Sigmoid colon (tissue), 7 donors: ENCODE measurements at regions of chr6 and their contacts with region 1.

Region 1: DNA sequence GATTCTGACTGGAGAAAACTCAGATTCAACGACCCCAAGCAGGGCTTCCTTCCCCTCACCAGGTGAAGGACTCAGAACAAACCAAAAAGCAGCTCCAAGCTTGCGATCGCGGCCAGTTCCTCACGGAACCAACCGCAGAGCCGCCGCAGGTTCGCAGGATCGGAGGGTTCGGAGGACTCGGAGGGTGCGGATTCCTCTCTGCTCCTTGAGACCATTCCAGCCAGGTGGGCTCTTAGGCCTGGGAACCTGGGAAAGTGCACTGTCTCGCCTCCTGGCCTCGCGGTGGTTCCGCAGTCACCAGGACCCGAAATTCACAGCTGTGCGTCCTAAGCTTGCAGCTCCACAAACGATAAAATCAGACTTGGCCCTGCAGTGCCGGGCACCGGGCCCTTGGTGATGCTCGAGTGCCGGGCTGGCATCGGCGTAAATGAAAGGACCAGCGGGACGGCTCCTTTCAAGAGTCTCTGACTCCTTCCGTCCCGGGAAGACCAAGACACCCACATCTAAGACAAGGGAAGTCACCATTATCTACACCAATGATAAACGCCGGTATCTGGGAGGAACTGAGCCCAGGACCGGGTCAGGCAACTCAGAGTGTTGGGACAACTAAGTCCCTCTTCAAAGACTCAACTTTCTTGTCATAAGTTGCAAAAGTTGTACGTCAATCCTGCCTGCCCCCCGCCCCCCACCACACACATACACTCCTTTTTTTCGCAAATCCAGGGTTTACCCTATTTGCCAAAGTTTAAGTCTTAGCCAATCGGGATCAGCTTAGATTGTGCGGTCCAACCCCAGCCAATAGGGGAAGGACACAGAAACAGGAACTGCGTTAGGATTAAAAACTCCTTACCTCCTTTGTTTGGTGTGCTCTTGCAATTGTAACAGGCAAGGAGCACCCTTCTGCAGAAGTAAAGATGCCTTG is 69.8 kb upstream of the PRSS16 start:
- DNase-seq: peak; percentile 92
- H3K4me3 ChIP-seq: peak overlapping the region; percentile 80 to 100 (median 96)
- H3K27ac ChIP-seq: peak overlapping the region; percentile 85 to 91 (median 88)
- H3K4me1 ChIP-seq: peaks cover 0 to 13% (median 3%) of the 10 kb centered on the region in 4 donors
- H3K27me3 ChIP-seq: no peaks in the 10 kb centered on the region
- CTCF ChIP-seq: peak in 3 of 4 experiments; percentile 28 to 34 (median 31)
- EP300 ChIP-seq: no peak
- POLR2A ChIP-seq: peak in 1 of 2 donors; percentile 26

Region 2: DNA sequence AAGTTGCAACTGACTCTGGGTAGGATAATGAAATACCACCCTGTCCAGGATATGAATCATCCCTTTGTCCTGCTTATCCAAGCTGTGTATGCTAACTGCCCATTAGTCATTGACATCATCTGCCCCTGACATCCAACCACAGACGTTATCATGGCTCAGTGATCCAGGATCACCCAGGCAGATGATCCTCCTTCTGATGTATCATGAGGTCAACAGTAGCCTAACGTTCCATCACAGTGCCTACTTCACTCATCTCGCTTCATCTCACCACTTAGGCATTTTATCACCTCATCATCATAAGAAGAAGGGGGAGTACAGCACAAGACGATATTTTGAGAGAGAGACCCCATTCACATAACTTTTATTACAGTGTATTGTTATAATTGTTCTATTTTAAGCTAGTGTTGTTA is 826.2 kb before region 1 on chr6:
- intact Hi-C with region 1: no loop called
- DNase-seq: no peak
- H3K4me3 ChIP-seq: no peak overlapping the region
- H3K27ac ChIP-seq: no peak overlapping the region
- H3K4me1 ChIP-seq: no peaks in the 10 kb centered on the region
- H3K27me3 ChIP-seq: no peaks in the 10 kb centered on the region
- CTCF ChIP-seq: no peak
- EP300 ChIP-seq: no peak
- POLR2A ChIP-seq: no peak

Region 3: DNA sequence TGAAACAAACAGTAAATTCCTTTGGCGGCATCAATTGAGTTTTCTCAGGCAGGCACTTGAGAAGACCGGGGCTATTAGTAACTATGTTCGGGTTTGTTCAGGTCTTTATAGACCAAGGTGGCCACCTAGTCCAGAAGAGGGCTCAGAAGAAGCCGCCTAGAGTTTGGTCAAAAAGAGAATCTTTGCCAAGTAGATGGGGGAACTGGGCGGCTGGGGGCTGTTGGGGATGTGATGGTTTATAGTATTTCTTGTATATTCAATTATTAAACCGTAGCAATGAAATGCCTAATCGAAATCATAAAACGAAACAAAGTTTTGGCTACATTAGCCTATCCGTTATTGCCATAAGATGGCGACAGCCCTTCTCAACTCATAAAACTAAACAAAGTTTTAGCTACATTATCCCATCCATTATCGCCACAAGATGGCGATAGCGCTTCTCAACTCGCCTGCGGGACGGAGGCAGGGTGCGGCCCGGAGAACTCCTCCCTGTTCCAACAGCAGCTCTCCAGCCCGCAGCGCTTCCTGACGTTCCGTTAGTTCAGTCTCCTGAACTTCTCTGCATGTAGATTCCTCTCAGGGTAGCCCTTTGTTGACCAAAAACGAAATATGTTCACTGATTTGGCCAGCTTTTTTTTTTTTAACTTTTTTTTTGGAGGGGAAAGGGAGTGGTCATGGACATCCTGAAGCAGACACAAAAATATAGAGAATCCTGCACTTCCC is 50.8 kb before region 1 on chr6:
- intact Hi-C with region 1: loop called (anchors 5 kb)
- DNase-seq: peak; percentile 95
- H3K4me3 ChIP-seq: peak overlapping the region in 3 of 4 donors; percentile 31 to 42 (median 38)
- H3K27ac ChIP-seq: peak overlapping the region; percentile 66 to 79 (median 70)
- H3K4me1 ChIP-seq: peaks cover 0 to 6% (median under 1%) of the 10 kb centered on the region in 4 donors
- H3K27me3 ChIP-seq: no peaks in the 10 kb centered on the region
- CTCF ChIP-seq: peak in 3 of 4 experiments; percentile 63 to 77 (median 77)
- EP300 ChIP-seq: no peak
- POLR2A ChIP-seq: no peak

Region 4: DNA sequence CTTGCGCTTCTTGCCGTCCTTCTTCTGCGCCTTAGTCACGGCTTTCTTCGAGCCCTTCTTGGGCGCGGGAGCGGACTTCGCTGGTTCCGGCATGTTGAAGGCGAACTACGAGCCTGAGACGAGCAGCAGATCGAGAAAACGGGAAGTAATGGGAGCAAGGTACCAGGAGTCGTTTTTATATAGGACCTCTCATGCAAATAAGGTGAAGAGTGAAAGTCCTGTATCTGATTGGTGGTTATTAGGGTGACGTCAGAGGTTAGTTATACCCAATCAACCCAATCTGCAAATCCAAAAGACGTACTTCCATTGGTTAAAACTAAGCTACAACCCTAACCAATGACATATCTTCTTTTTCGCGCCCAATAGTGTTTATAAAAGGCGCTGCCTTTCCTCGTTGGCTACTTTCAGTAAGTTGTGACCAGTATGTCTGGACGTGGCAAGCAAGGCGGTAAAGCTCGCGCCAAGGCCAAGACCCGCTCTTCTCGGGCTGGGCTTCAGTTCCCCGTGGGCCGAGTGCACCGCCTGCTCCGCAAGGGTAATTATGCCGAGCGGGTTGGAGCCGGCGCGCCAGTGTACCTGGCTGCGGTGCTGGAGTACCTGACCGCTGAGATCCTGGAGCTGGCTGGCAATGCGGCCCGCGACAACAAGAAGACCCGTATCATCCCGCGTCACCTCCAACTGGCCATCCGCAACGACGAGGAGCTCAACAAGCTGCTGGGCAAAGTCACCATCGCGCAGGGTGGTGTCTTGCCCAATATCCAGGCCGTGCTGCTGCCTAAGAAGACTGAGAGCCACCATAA is 30.8 kb before region 1 on chr6:
- intact Hi-C with region 1: loop called (anchors 1 kb)
- DNase-seq: peak; percentile 92
- H3K4me3 ChIP-seq: peak overlapping the region; percentile 50 to 59 (median 56)
- H3K27ac ChIP-seq: peak overlapping the region; percentile 86 to 94 (median 91)
- H3K4me1 ChIP-seq: peaks cover 0 to 26% (median 20%) of the 10 kb centered on the region in 4 donors
- H3K27me3 ChIP-seq: no peaks in the 10 kb centered on the region
- CTCF ChIP-seq: no peak
- EP300 ChIP-seq: peak in 1 of 4 donors; percentile 20
- POLR2A ChIP-seq: peak; percentile 95 to 96

Region 5: DNA sequence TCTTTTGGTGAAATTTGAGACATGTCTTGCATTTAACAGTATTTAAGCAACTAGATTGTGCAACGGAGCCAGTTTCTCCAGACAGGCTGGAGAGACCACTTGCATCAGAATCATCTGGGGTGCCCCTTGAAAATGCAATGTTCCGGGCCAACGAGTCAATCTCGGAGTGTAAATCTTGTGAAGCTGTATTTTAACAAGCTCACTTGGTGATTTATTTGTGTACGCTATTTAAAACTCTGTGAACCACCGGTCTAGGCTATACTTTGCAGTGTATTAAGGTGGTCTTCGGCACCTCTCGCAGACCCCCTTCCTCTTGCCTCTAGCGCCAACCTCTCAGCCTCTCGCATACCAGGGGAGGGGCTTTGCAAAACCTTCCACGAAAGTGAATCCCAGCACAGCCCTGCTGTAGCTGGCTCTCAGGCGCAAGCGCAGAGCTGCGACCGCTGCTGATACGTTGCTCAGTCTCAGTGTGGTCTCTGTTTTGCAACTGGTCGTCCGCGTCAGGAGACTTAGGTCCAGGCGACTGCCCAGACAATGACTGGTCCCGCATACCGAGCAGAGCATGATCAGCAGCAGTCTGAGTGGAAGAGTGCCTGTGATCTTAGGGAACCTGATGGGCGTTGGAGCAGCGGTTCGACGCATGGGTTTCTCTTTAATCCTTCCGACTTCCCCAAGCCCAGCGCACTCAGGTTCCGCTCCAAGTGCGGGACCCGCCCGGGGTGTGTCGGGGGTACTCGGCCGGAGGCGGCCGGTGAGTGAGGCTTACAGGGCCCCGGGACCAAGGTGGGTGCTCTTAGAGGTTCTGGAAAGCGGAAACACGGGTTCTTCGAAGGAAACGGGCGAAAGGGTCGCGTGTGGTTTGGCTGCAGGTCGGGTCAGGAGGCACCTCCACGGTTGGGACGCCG is 210.8 kb after region 1 on chr6 and contains the start of gene ZNF391:
- intact Hi-C with region 1: loop called (anchors 5 kb)
- DNase-seq: peak; percentile 85
- H3K4me3 ChIP-seq: peak within 1 kb of the TSS; percentile 58 to 71 (median 68)
- H3K27ac ChIP-seq: peak within 1 kb of the TSS; percentile 76 to 81 (median 78)
- H3K4me1 ChIP-seq: peaks cover 0 to 15% (median 8%) of the 10 kb centered on the region in 4 donors
- H3K27me3 ChIP-seq: no peaks in the 10 kb centered on the region
- CTCF ChIP-seq: no peak
- EP300 ChIP-seq: no peak
- POLR2A ChIP-seq: no peak
- total RNA-seq, gene ZNF391: 3.5 to 14.1 (median 5.4) TPM

Region 6: GRCh38 chr6:27479319-27480182 is 301.8 kb after region 1 on chr6:
- intact Hi-C with region 1: loop called (anchors 2 kb)
- DNase-seq: peak; percentile 91
- H3K4me3 ChIP-seq: peak overlapping the region; percentile 64 to 74 (median 68)
- H3K27ac ChIP-seq: peak overlapping the region; percentile 91 to 96 (median 95)
- H3K4me1 ChIP-seq: peaks cover 0 to 14% (median 9%) of the 10 kb centered on the region in 4 donors
- H3K27me3 ChIP-seq: no peaks in the 10 kb centered on the region
- CTCF ChIP-seq: no peak
- EP300 ChIP-seq: no peak
- POLR2A ChIP-seq: no peak

Region 7: GRCh38 chr6:27518881-27519795 is 341.4 kb after region 1 on chr6:
- intact Hi-C with region 1: loop called (anchors 5 kb)
- DNase-seq: peak; percentile 88
- H3K4me3 ChIP-seq: peak overlapping the region; percentile 53 to 80 (median 62)
- H3K27ac ChIP-seq: peak overlapping the region; percentile 86 to 93 (median 89)
- H3K4me1 ChIP-seq: peaks cover 0 to 18% (median 10%) of the 10 kb centered on the region in 4 donors
- H3K27me3 ChIP-seq: peaks cover 0 to 15% (median 0%) of the 10 kb centered on the region in 3 donors
- CTCF ChIP-seq: peak; percentile 25 to 67 (median 62)
- EP300 ChIP-seq: no peak
- POLR2A ChIP-seq: no peak

Region 8: GRCh38 chr6:27893059-27893835 is 715.5 kb after region 1 on chr6:
- intact Hi-C with region 1: loop called (anchors 5 kb)
- DNase-seq: peak; percentile 81
- H3K4me3 ChIP-seq: peak overlapping the region; percentile 48 to 71 (median 59)
- H3K27ac ChIP-seq: peak overlapping the region in 3 of 4 donors; percentile 33 to 92 (median 59)
- H3K4me1 ChIP-seq: peaks cover 0 to 25% (median 24%) of the 10 kb centered on the region in 4 donors
- H3K27me3 ChIP-seq: peaks cover 22 to 56% (median 47%) of the 10 kb centered on the region in 3 donors
- CTCF ChIP-seq: no peak
- EP300 ChIP-seq: no peak
- POLR2A ChIP-seq: peak in 1 of 2 donors; percentile 84